WTC11 (cell line): ENCODE measurements at regions of chr19 and their contacts with region 1.

Region 1: GRCh38 chr19:21396893-21397572 is at the start of gene ZNF493:
- DNase-seq: peak; percentile 90
- ATAC-seq: peak; percentile 99
- H3K4me3 Mint-ChIP-seq: peak within 1 kb of the TSS; percentile 94
- H3K27ac Mint-ChIP-seq: peak within 1 kb of the TSS; percentile 94
- H3K4me1 Mint-ChIP-seq: peaks cover 3% of the 10 kb centered on the region; the same call in 1 of the 2 replicates
- H3K27me3 Mint-ChIP-seq: no peaks in the 10 kb centered on the region
- CTCF ChIP-seq: no peak
- total RNA-seq, gene ZNF493: 15.0 to 22.2 TPM (median 15.5 TPM) in 3 replicates

Region 2: GRCh38 chr19:21474671-21475181 is 77.7 kb after region 1 on chr19:
- CTCF ChIA-PET with region 1: no interaction called
- POLR2A ChIA-PET with region 1: interaction called, 14 read pairs
- DNase-seq: peak; percentile 85
- ATAC-seq: peak; percentile 96
- H3K4me3 Mint-ChIP-seq: peak overlapping the region; percentile 74
- H3K27ac Mint-ChIP-seq: 0 out of 2 replicates have a peak overlapping the region, but pooled peaks have one; percentile 45
- H3K4me1 Mint-ChIP-seq: 0 out of 2 replicates have a peak, but pooled peaks cover 3% of the 10 kb centered on the region
- H3K27me3 Mint-ChIP-seq: peaks cover 3% of the 10 kb centered on the region
- CTCF ChIP-seq: no peak

Region 3: GRCh38 chr19:21482863-21483276 is 85.8 kb after region 1 on chr19:
- CTCF ChIA-PET with region 1: interaction called, 11 read pairs
- POLR2A ChIA-PET with region 1: interaction called, 14 read pairs
- DNase-seq: peak; percentile 72
- ATAC-seq: peak; percentile 84
- H3K4me3 Mint-ChIP-seq: no peak overlapping the region
- H3K27ac Mint-ChIP-seq: no peak overlapping the region
- H3K4me1 Mint-ChIP-seq: no peaks in the 10 kb centered on the region
- H3K27me3 Mint-ChIP-seq: peaks cover 5% of the 10 kb centered on the region
- CTCF ChIP-seq: peak; percentile 91